SK-N-SH (cell line): ENCODE measurements at regions of chr7 and their contacts with region 1.

Region 1: GRCh38 chr7:154744256-154744860 is 258.6 kb downstream of the PAXIP1 start:
- DNase-seq: peak; percentile 86
- H3K4me3 ChIP-seq: no peak overlapping the region; a peak in 1 of 4 replicates
- H3K27ac ChIP-seq: peak overlapping the region in 1 of 2 experiments; percentile 75; a peak in 1 of 4 replicates
- H3K4me1 ChIP-seq: peaks cover 0 to 40% of the 10 kb centered on the region in 2 experiments; a peak in 2 of 4 replicates
- H3K27me3 ChIP-seq: no peaks in the 10 kb centered on the region
- CTCF ChIP-seq: peak; percentile 61
- EP300 ChIP-seq: no peak
- RAD21 ChIP-seq: peak; percentile 73

Region 2: DNA sequence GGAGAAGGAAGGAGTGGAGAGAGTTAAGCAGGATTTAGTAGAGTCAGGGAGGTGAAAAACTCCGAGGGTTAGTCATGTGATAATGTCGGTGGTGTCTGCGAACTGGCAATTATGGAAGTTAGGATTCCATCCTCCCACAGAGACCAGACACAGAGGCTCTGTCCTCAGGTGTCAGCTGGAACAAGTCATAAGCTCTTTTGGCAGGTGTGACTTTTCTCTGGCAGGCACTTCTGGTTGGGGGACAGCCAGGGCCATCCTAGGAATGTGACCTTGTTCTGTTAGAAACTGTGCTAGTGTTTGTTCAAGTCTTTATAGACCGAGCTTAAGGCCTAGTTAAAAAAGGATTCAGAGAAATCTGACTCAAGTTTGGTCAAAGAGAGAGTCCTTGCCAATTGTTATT is 321.1 kb before region 1 on chr7:
- CTCF ChIA-PET with region 1: no interaction called
- POLR2A ChIA-PET with region 1: no interaction called
- DNase-seq: no peak
- H3K4me3 ChIP-seq: no peak overlapping the region
- H3K27ac ChIP-seq: no peak overlapping the region
- H3K4me1 ChIP-seq: no peaks in the 10 kb centered on the region
- H3K27me3 ChIP-seq: no peaks in the 10 kb centered on the region
- CTCF ChIP-seq: no peak
- EP300 ChIP-seq: no peak
- RAD21 ChIP-seq: no peak

Region 3: GRCh38 chr7:154503962-154504550 is 240.3 kb before region 1 on chr7:
- CTCF ChIA-PET with region 1: interaction called, 30 read pairs
- POLR2A ChIA-PET with region 1: no interaction called
- DNase-seq: peak; percentile 47
- H3K4me3 ChIP-seq: no peak overlapping the region; a peak in 1 of 4 replicates
- H3K27ac ChIP-seq: no peak overlapping the region
- H3K4me1 ChIP-seq: no peaks in the 10 kb centered on the region
- H3K27me3 ChIP-seq: no peaks in the 10 kb centered on the region
- CTCF ChIP-seq: peak; percentile 78
- EP300 ChIP-seq: no peak
- RAD21 ChIP-seq: peak; percentile 82

Region 4: DNA sequence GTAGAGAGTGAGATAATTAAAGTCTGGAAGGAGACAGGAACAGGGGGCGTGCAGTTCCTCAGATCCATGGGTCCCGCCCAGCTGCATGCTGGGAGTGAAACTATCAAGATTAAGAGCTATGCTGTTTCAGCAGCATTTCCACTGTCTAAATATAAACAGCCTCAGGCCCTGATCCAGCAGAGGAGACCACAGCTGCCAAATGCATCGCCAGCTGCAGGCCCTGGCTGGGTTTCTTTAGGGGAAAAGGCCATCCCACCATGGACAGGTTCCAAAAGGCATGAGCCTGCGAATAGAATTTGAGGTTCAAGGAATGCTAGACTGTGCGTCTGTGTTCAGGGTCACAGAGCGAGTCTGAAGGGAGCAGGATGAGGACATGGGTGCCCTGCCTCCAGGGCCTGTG is 152.8 kb before region 1 on chr7:
- CTCF ChIA-PET with region 1: interaction called, 21 read pairs
- POLR2A ChIA-PET with region 1: no interaction called
- DNase-seq: peak; percentile 77
- H3K4me3 ChIP-seq: no peak overlapping the region
- H3K27ac ChIP-seq: peak overlapping the region in 1 of 2 experiments; percentile 39; a peak in 2 of 4 replicates
- H3K4me1 ChIP-seq: peaks cover 0 to 23% of the 10 kb centered on the region in 2 experiments; a peak in 1 of 4 replicates
- H3K27me3 ChIP-seq: no peaks in the 10 kb centered on the region
- CTCF ChIP-seq: no peak
- EP300 ChIP-seq: peak in 1 of 2 experiments; percentile 38; a peak in 1 of 4 replicates
- RAD21 ChIP-seq: no peak

Region 5: GRCh38 chr7:154640266-154640865 is 104.0 kb before region 1 on chr7:
- CTCF ChIA-PET with region 1: interaction called, 72 read pairs
- POLR2A ChIA-PET with region 1: no interaction called
- DNase-seq: peak; percentile 69
- H3K4me3 ChIP-seq: no peak overlapping the region
- H3K27ac ChIP-seq: no peak overlapping the region
- H3K4me1 ChIP-seq: no peaks in the 10 kb centered on the region
- H3K27me3 ChIP-seq: no peaks in the 10 kb centered on the region
- CTCF ChIP-seq: no peak
- EP300 ChIP-seq: no peak
- RAD21 ChIP-seq: peak; percentile 83

Region 6: GRCh38 chr7:154720016-154720415 is 24.3 kb before region 1 on chr7:
- CTCF ChIA-PET with region 1: interaction called, 149 read pairs
- POLR2A ChIA-PET with region 1: no interaction called
- DNase-seq: no peak
- H3K4me3 ChIP-seq: no peak overlapping the region
- H3K27ac ChIP-seq: no peak overlapping the region
- H3K4me1 ChIP-seq: no peaks in the 10 kb centered on the region
- H3K27me3 ChIP-seq: no peaks in the 10 kb centered on the region
- CTCF ChIP-seq: no peak
- EP300 ChIP-seq: no peak
- RAD21 ChIP-seq: no peak

Region 7: GRCh38 chr7:154777023-154777422 is 32.7 kb after region 1 on chr7:
- CTCF ChIA-PET with region 1: interaction called, 33 read pairs
- POLR2A ChIA-PET with region 1: no interaction called
- DNase-seq: peak; percentile 58
- H3K4me3 ChIP-seq: no peak overlapping the region
- H3K27ac ChIP-seq: no peak overlapping the region
- H3K4me1 ChIP-seq: peaks cover 0 to 17% of the 10 kb centered on the region in 2 experiments; a peak in 2 of 4 replicates
- H3K27me3 ChIP-seq: no peaks in the 10 kb centered on the region
- CTCF ChIP-seq: no peak
- EP300 ChIP-seq: no peak
- RAD21 ChIP-seq: peak; percentile 15; the same call in 1 of the 2 replicates